Activated CD4-positive, alpha-beta T cell treated with anti-CD3 and anti-CD28 coated beads, Interleukin-2, amount 10 ng/mL, durations not matched to agents 24 days and 14 days (primary cell): ENCODE measurements at regions of chr3 and their contacts with region 1.

Region 1: GRCh38 chr3:184543843-184544512 is 17.6 kb upstream of the EPHB3 start:
- DNase-seq: peak; percentile 94
- H3K4me3 Mint-ChIP-seq: no peak overlapping the region
- H3K27ac Mint-ChIP-seq: peak overlapping the region; percentile 20
- H3K4me1 Mint-ChIP-seq: peaks cover 7% of the 10 kb centered on the region
- H3K27me3 Mint-ChIP-seq: peaks cover 21% of the 10 kb centered on the region

Region 2: DNA sequence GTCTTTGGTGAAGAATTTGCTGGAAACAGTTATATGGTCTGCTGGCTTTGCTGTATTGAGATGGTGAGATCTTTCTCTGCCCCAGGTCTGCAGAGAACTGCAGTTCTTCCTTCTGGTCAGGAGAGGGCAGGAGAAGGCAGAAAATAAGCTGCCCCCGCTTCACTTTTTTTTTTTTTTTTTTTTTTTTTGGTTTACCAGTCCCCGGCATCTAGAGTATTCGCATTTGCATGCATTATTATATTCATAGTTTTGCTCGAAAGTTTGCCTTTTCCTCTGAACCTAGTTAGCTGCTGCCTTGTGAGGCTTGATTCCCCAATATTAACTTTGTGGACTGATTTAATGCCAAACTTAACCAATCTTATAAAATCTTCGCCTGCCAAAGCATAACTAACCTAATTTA is 648.7 kb before region 1 on chr3:
- intact Hi-C with region 1: loop called (anchors 5 kb)
- DNase-seq: peak; percentile 83
- H3K4me3 Mint-ChIP-seq: no peak overlapping the region
- H3K27ac Mint-ChIP-seq: no peak overlapping the region
- H3K4me1 Mint-ChIP-seq: no peaks in the 10 kb centered on the region
- H3K27me3 Mint-ChIP-seq: peaks cover 17% of the 10 kb centered on the region

Region 3: GRCh38 chr3:184371570-184372018 is 172.4 kb before region 1 on chr3:
- intact Hi-C with region 1: loop called (anchors 1 kb)
- DNase-seq: peak; percentile 89
- H3K4me3 Mint-ChIP-seq: no peak overlapping the region
- H3K27ac Mint-ChIP-seq: no peak overlapping the region
- H3K4me1 Mint-ChIP-seq: peaks cover 20% of the 10 kb centered on the region
- H3K27me3 Mint-ChIP-seq: peaks cover 19% of the 10 kb centered on the region

Region 4: DNA sequence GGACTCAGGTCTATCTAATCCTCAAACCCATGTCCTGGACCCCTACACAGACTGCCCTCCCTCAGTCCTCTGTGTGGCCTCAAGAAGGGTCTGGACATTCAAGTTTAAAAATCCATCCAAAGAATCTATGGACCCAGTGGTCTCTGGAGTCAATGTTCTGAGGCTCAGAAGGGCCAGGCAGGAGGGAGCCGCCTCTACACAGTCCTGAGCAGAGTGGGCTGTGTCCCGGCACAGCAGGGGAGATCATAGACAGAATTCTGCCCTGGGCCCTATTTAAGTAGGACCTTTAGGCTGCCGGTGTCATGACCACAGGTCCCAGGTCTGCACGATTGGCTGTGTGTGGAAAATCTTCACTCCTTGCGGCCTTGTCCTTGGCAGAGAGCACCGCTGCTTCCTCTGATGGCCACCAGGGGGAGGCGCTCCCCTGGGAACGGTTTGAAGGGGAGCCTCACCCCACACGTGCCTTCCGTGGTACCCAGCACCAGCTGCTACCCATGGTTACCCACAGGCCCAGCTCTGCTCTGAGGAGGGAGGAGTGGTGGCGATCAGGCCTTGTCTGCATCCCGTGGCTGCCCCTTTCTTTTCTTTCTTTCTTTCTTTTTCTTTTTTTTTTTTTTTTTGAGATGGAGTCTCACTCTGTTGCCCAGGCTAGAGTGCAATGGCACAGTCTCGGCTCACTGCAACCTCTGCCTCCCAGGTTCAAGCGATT is 126.2 kb before region 1 on chr3:
- intact Hi-C with region 1: loop called (anchors 1 kb)
- DNase-seq: peak; percentile 89
- H3K4me3 Mint-ChIP-seq: no peak overlapping the region
- H3K27ac Mint-ChIP-seq: no peak overlapping the region
- H3K4me1 Mint-ChIP-seq: no peaks in the 10 kb centered on the region
- H3K27me3 Mint-ChIP-seq: peaks cover 3% of the 10 kb centered on the region

Region 5: GRCh38 chr3:184469423-184469822 is 74.6 kb before region 1 on chr3:
- intact Hi-C with region 1: loop called (anchors 1 kb)
- DNase-seq: peak; percentile 71
- H3K4me3 Mint-ChIP-seq: no peak overlapping the region
- H3K27ac Mint-ChIP-seq: no peak overlapping the region
- H3K4me1 Mint-ChIP-seq: peaks cover 8% of the 10 kb centered on the region
- H3K27me3 Mint-ChIP-seq: peaks cover 28% of the 10 kb centered on the region

Region 6: DNA sequence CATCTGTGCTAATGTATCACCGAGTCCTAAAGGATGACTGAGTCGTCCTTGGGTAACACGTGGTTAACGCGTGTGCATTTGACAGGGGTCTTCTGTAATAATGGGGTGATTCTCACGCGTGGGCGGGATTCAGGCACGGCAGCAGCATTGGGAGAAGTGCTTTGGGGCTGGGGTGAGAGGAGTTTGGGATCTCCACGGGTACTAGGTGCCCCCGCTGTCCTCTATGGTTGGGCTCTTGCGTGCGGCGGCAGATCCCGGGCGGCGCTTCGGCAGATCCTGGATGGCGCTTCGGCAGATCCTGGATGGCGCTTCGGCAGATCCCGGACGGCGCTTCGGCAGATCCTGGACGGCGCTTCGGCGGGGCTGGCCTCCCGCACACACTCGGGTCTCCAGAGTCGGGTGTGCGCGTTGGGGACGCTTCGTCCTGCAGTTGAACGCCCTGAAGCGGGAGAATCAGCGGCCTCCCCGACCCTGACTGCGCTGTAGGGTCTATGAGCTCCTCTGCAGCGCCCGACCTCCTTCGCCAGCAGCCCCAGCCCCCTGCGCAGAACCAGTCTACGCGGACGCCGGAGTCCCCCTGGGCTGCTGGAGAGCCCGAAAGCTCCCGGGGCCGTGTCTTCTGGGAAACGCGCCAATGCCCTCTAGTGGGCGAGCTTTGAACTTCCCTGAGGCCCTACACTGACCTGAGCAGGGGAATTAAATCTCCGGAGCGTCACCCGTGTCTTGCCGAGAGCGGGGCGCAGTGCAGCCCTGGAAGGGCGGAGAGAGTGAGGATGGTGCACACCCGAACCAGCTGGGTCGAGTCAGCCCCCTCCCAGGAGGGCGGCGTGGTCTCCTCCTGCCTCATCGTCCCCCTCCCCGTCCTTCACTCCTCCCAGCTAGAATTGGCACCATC is 30.5 kb before region 1 on chr3:
- intact Hi-C with region 1: loop called (anchors 1 kb)
- DNase-seq: peak; percentile 95
- H3K4me3 Mint-ChIP-seq: peak overlapping the region; percentile 72
- H3K27ac Mint-ChIP-seq: no peak overlapping the region
- H3K4me1 Mint-ChIP-seq: peaks cover 8% of the 10 kb centered on the region
- H3K27me3 Mint-ChIP-seq: peaks cover 79% of the 10 kb centered on the region

Region 7: GRCh38 chr3:184523825-184524615 is 20.0 kb before region 1 on chr3:
- intact Hi-C with region 1: loop called (anchors 2 kb)
- DNase-seq: peak; percentile 77
- H3K4me3 Mint-ChIP-seq: peak overlapping the region; percentile 59
- H3K27ac Mint-ChIP-seq: peak overlapping the region; percentile 66
- H3K4me1 Mint-ChIP-seq: peaks cover 15% of the 10 kb centered on the region
- H3K27me3 Mint-ChIP-seq: peaks cover 29% of the 10 kb centered on the region

Region 8: DNA sequence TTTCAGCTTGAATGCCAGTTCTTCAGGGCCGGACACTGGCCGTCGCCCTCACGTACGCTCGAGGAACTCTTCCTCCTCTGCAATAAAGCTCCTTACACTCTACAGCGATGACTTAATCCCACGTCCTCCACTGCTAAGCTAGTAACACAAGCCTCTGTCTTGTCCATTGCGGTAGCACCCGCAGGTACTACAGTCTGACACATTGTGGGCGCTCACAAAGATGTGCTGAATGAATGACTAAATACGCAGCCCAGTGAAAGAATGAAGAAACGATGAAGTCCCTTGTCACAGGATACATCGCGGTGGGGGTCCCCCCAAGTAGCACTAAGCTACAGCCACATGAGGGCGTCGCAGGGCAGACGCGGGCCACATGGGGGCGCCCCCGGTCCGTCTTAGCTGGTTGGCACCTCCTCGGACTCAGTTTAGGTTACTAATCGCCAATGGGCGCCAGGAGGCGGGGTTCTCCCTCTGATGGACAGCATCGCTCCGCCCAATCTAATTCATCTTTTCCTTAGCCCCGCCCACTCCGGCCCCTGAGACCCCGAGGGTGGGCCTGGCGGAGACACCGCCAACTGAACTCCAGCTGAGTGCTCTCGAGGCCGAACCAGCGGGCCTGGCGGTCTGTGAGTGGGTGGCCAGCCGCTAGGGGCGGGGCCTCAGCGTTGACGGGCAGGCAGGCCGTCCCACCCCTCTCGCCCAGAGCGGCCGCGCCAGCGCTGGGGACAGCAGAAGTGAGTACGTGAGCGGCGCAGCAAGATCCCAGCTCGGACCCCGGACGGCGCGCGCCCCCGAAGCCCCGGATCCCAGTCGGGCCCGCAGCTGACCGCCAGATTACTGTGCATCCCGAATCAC is 17.3 kb after region 1 on chr3 and contains the start of gene EPHB3:
- intact Hi-C with region 1: no loop called
- DNase-seq: peak; percentile 96
- H3K4me3 Mint-ChIP-seq: peak within 1 kb of the TSS; percentile 77
- H3K27ac Mint-ChIP-seq: peak within 1 kb of the TSS; percentile 10
- H3K4me1 Mint-ChIP-seq: peaks cover 21% of the 10 kb centered on the region
- H3K27me3 Mint-ChIP-seq: peaks cover 55% of the 10 kb centered on the region
- total RNA-seq, gene EPHB3: 0.05 TPM in 1 of 2 replicates, not detected in the other